Activated naive CD4-positive, alpha-beta T cell treated with anti-CD3 and anti-CD28 coated beads for 36 hours (primary cell): ENCODE measurements at regions of chr6 and their contacts with region 1.

Region 1: GRCh38 chr6:27893059-27893835 is 18.9 kb downstream of the OR2B2 start:
- DNase-seq: peak; percentile 93
- H3K4me3 Mint-ChIP-seq: no peak overlapping the region
- H3K27ac Mint-ChIP-seq: no peak overlapping the region
- H3K4me1 Mint-ChIP-seq: peaks cover 27% of the 10 kb centered on the region
- H3K27me3 Mint-ChIP-seq: peaks cover 2% of the 10 kb centered on the region

Region 2: GRCh38 chr6:26596579-26597388 is 1296.5 kb before region 1 on chr6 and contains the start of gene ABT1:
- CTCF ChIA-PET with region 1: no interaction called
- intact Hi-C with region 1: loop called (anchors 2 kb)
- DNase-seq: peak; percentile 99
- H3K4me3 Mint-ChIP-seq: no peak within 1 kb of the TSS
- H3K27ac Mint-ChIP-seq: no peak within 1 kb of the TSS
- H3K4me1 Mint-ChIP-seq: peaks cover 53% of the 10 kb centered on the region
- H3K27me3 Mint-ChIP-seq: peaks cover 24% of the 10 kb centered on the region
- total RNA-seq, gene ABT1: 17.3 to 18.4 TPM

Region 3: DNA sequence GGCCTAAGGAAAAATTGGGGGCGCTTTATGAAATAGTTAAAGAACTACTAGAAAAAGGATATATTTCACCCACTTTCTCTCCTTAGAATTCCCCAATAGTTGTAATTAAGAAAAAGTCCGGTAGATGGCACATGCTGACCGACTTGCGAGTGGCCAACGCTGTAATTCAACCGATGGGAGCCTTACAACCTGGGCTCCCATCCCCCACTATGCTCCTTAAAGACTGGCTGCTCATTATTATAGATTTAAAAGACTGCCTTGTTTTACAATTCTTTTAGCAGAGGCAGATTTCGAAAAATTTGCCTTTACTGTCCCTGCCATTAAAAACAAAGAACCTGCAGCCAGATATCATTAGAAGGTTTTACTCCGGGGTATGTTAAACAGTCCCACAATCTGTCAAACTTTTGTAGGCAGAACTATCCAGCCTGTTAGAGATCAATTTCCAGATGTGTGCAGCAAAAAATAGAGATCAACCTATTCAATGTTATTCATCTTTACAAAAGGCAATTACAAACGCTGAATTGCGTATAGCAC is 704.3 kb before region 1 on chr6:
- CTCF ChIA-PET with region 1: no interaction called
- intact Hi-C with region 1: loop called (anchors 1 kb)
- DNase-seq: peak; percentile 67
- H3K4me3 Mint-ChIP-seq: peak overlapping the region; percentile 84
- H3K27ac Mint-ChIP-seq: no peak overlapping the region
- H3K4me1 Mint-ChIP-seq: peaks cover 9% of the 10 kb centered on the region
- H3K27me3 Mint-ChIP-seq: no peaks in the 10 kb centered on the region

Region 4: DNA sequence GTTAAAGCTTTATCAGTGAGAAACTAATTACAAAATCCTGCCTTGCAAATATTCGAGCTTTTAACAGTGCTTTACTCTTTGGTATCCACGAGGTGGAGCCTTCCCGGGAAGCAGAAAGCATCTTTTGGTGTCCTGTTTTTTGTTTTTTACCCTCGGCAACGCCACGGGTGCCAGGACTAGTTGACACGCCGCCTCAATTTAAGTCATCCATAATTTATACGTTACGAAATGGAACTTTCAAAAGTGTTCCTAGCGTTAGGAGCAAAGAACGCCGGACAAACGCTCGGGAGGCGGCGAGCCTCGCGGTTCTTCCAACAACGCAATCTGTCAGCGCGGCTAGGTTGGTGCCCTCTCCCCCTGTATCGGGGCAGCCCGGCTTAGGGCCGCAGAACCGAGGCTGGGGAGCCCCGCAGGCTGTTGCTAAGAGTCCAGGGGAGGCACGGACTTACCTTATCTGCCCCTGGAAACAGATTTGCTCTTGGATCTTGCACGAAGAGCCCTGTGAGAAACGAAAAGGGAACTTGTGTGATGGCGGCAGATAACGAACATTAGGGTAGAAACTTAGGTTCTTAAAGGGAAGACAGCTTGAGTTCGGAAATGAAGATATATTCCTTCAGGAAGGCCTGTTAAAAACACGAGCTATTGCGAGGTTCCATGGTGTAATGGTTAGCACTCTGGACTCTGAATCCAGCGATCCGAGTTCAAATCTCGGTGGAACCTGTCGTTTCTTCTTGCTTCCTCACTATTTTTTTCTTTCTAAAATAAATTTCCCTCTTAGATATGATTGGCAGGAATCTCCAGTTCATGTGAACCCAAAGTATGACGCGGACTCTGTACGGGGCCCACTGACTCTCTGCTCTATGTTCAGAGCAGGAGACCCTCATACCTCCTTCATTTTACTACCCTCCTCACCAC is 374.1 kb before region 1 on chr6:
- CTCF ChIA-PET with region 1: no interaction called
- intact Hi-C with region 1: loop called (anchors 1 kb)
- DNase-seq: peak; percentile 82
- H3K4me3 Mint-ChIP-seq: peak overlapping the region; percentile 76
- H3K27ac Mint-ChIP-seq: peak overlapping the region; percentile 81
- H3K4me1 Mint-ChIP-seq: peaks cover 18% of the 10 kb centered on the region
- H3K27me3 Mint-ChIP-seq: peaks cover 10% of the 10 kb centered on the region

Region 5: GRCh38 chr6:27608916-27609883 is 284.0 kb before region 1 on chr6:
- CTCF ChIA-PET with region 1: no interaction called
- intact Hi-C with region 1: no loop called
- DNase-seq: peak; percentile 30
- H3K4me3 Mint-ChIP-seq: no peak overlapping the region
- H3K27ac Mint-ChIP-seq: no peak overlapping the region
- H3K4me1 Mint-ChIP-seq: peaks cover 13% of the 10 kb centered on the region
- H3K27me3 Mint-ChIP-seq: peaks cover 51% of the 10 kb centered on the region

Region 6: GRCh38 chr6:27809939-27810767 is 83.1 kb before region 1 on chr6:
- CTCF ChIA-PET with region 1: interaction called, 15 read pairs
- intact Hi-C with region 1: loop called (anchors 1 kb)
- DNase-seq: peak; percentile 81
- H3K4me3 Mint-ChIP-seq: peak overlapping the region; percentile 93
- H3K27ac Mint-ChIP-seq: peak overlapping the region; percentile 95
- H3K4me1 Mint-ChIP-seq: peaks cover 41% of the 10 kb centered on the region
- H3K27me3 Mint-ChIP-seq: peaks cover 3% of the 10 kb centered on the region

Region 7: DNA sequence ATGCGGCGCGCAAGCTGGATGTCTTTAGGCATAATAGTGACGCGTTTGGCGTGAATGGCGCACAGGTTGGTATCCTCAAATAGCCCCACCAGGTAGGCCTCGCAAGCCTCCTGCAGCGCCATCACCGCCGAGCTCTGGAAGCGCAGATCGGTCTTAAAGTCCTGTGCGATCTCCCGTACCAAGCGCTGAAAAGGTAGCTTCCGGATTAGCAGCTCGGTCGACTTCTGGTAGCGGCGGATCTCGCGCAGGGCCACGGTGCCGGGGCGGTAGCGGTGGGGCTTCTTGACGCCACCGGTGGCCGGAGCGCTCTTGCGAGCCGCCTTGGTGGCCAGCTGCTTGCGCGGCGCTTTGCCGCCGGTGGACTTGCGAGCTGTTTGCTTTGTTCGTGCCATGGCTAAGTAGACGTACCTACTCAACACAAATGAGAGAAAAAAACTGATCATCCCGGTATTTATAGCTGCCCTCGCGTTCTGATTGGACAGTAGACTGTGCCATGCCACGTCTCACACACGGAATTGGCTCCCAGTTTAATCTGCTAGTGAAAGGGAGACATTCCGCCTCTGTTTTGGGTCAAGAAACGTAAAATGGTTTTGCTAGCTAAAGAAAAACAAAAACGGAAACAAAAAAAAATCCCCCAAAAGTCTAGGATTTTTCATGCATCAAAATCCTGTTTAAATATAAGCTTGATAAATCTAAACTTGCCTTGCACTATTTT is 21.2 kb before region 1 on chr6:
- CTCF ChIA-PET with region 1: interaction called, 35 read pairs
- intact Hi-C with region 1: loop called (anchors 1 kb)
- DNase-seq: peak; percentile 81
- H3K4me3 Mint-ChIP-seq: peak overlapping the region; percentile 91
- H3K27ac Mint-ChIP-seq: peak overlapping the region; percentile 97
- H3K4me1 Mint-ChIP-seq: peaks cover 34% of the 10 kb centered on the region
- H3K27me3 Mint-ChIP-seq: peaks cover 8% of the 10 kb centered on the region

Region 8: DNA sequence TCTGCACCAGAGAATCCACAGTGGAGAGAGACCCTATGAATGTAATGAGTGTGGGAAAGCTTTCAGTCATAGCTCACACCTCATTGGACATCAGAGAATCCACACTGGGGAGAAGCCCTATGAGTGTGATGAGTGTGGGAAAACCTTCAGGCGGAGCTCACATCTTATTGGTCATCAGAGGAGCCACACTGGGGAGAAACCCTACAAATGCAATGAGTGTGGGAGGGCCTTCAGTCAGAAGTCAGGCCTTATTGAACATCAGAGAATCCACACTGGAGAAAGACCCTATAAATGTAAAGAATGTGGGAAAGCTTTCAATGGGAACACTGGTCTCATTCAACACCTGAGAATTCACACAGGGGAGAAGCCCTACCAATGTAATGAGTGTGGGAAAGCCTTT is 260.3 kb after region 1 on chr6:
- CTCF ChIA-PET with region 1: no interaction called
- intact Hi-C with region 1: no loop called
- DNase-seq: no peak
- H3K4me3 Mint-ChIP-seq: no peak overlapping the region
- H3K27ac Mint-ChIP-seq: no peak overlapping the region
- H3K4me1 Mint-ChIP-seq: no peaks in the 10 kb centered on the region
- H3K27me3 Mint-ChIP-seq: no peaks in the 10 kb centered on the region

Region 9: DNA sequence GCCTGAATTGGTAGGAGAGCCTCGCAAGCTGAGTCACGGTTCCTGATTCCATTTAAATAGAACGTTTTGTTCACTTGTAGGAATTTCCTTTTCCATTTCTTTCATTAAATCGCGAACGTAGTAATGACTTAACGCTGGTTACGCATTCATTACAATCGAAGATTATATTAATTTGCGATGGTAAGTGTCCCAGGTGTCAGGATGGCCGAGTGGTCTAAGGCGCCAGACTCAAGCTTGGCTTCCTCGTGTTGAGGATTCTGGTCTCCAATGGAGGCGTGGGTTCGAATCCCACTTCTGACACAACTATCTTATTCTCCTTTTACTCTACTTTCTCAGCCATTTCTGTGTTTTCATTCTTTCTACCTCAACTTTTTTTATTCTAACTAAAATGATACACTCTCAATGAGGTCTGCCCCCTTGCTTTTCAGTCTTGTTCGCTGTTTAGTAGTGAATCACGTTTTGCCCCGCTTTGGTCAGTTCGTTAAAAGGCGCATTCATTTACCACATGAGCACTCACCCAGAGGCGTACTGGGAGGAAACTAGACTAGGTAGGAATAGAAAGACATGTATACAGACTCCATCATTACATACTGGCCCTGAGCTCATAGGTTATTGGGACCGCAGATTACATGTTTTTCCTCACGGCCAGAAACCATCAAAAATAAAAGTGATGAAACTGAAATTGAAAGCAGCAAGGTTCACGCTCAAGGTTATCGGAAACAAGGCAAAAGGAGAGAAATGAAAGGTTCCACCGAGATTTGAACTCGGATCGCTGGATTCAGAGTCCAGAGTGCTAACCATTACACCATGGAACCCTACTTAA is 1047.8 kb after region 1 on chr6:
- CTCF ChIA-PET with region 1: interaction called, 3 read pairs
- intact Hi-C with region 1: loop called (anchors 5 kb)
- DNase-seq: peak; percentile 87
- H3K4me3 Mint-ChIP-seq: peak overlapping the region; percentile 93
- H3K27ac Mint-ChIP-seq: peak overlapping the region; percentile 99
- H3K4me1 Mint-ChIP-seq: peaks cover 40% of the 10 kb centered on the region
- H3K27me3 Mint-ChIP-seq: no peaks in the 10 kb centered on the region